Prostate gland (tissue), 2 donors: ENCODE measurements at regions of chr4 and their contacts with region 1.

Region 1: GRCh38 chr4:185039508-185040273 is 21.4 kb downstream of the HELT start:
- DNase-seq: peak; percentile 54
- H3K4me3 ChIP-seq: no peak overlapping the region
- H3K27ac ChIP-seq: no peak overlapping the region
- H3K4me1 ChIP-seq: no peaks in the 10 kb centered on the region
- H3K27me3 ChIP-seq: no peaks in the 10 kb centered on the region
- CTCF ChIP-seq: peak; percentile 36 to 82 (median 75)
- POLR2A ChIP-seq: no peak

Region 2: GRCh38 chr4:184851200-184851541 is 188.5 kb before region 1 on chr4:
- intact Hi-C with region 1: no loop called
- DNase-seq: no peak
- H3K4me3 ChIP-seq: no peak overlapping the region
- H3K27ac ChIP-seq: no peak overlapping the region
- H3K4me1 ChIP-seq: no peaks in the 10 kb centered on the region
- H3K27me3 ChIP-seq: no peaks in the 10 kb centered on the region
- CTCF ChIP-seq: no peak
- POLR2A ChIP-seq: no peak

Region 3: GRCh38 chr4:185096032-185096653 is 56.5 kb after region 1 on chr4:
- intact Hi-C with region 1: loop called (anchors 2 kb)
- DNase-seq: peak; percentile 37
- H3K4me3 ChIP-seq: no peak overlapping the region
- H3K27ac ChIP-seq: no peak overlapping the region
- H3K4me1 ChIP-seq: no peaks in the 10 kb centered on the region
- H3K27me3 ChIP-seq: no peaks in the 10 kb centered on the region
- CTCF ChIP-seq: peak in 3 of 4 experiments; percentile 62 to 77 (median 66)
- POLR2A ChIP-seq: no peak

Region 4: DNA sequence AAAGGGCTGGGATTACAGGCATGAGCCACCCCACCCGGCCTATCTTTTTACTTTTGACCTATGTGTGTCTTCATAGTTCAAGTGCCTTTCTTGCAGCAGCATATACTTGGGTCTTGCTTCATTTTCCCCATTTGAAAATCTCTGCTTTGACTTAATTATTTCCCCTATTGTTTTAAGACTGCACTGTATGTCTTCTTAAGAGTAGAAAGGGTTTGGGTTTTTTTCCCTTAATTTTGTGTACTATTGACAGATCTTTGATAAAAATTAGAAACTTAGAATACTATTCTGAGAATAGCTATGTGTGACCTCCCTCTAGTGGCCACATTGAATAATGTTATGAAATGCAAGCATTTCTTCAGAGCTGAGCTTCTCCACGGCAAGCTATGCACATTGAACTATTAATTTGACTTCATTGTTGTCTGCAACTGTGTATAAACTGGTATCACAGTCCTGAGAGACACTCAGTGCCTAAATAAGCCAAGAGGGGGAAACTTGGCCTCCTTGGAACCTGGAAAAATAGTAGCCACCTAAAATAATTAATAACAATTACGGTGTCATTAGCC is 94.7 kb after region 1 on chr4:
- intact Hi-C with region 1: loop called (anchors 5 kb)
- DNase-seq: peak; percentile 28
- H3K4me3 ChIP-seq: no peak overlapping the region
- H3K27ac ChIP-seq: no peak overlapping the region
- H3K4me1 ChIP-seq: no peaks in the 10 kb centered on the region
- H3K27me3 ChIP-seq: no peaks in the 10 kb centered on the region
- CTCF ChIP-seq: peak; percentile 51 to 84 (median 78)
- POLR2A ChIP-seq: no peak

Region 5: GRCh38 chr4:185149392-185149791 is 109.7 kb after region 1 on chr4:
- intact Hi-C with region 1: no loop called
- DNase-seq: no peak
- H3K4me3 ChIP-seq: no peak overlapping the region
- H3K27ac ChIP-seq: no peak overlapping the region
- H3K4me1 ChIP-seq: no peaks in the 10 kb centered on the region
- H3K27me3 ChIP-seq: no peaks in the 10 kb centered on the region
- CTCF ChIP-seq: no peak
- POLR2A ChIP-seq: no peak